ENCODE measurements at regions of chr10 and their contacts with region 1.

Region 1: DNA sequence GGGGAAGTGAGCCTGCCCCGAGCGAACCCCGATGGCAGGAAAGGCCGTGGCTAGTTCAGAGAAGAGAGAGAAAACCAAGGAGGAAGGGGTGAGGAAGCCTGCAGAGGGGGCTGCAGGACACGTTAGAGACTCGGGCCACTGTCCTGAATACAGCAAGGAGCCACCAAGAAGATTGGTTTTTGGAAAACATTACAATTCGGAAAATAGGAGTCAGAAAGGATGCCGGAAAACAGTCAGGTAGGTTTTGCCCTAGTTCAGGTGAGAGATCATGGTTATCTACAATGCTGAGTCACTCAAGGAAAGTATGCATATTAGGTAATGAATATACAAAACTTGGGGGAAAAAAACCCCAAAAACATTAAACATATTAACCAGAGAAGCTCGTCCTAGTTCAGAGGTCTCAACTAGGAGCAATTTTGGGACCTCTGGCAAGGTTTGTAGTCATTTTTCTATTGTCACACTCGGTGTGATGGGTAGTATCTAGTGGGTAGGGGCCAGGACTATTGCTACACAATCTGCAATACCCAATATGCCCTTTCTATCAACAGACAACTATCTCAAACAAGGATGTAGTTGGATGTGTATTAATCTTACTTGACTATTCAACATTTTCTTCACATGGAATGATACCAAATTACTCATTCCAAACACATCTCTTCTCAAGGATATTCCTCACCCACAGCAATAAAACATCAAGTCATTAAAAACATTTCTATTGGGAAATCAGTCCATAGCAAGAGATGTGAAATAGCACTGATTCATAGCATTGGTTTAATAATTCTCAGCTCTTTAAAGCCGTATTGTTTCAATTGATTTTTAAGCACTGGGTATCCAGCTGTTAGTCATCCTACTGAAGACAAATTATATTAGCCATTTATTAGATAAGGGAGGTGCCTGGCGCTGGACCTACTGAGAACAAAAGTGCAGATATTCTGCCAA is 74.4 kb upstream of the RSU1 start:
- DNase-seq: peak; percentile 58
- H3K4me3 Mint-ChIP-seq: peak overlapping the region; percentile 68
- H3K27ac Mint-ChIP-seq: peak overlapping the region; percentile 99
- H3K4me1 Mint-ChIP-seq: peaks cover 23% of the 10 kb centered on the region
- H3K27me3 Mint-ChIP-seq: no peaks in the 10 kb centered on the region
- CTCF ChIP-seq: no peak

Region 2: GRCh38 chr10:16965740-16966447 is 74.2 kb after region 1 on chr10:
- CTCF ChIA-PET with region 1: no interaction called
- intact Hi-C with region 1: loop called (anchors 2 kb)
- DNase-seq: peak; percentile 77
- H3K4me3 Mint-ChIP-seq: no peak overlapping the region
- H3K27ac Mint-ChIP-seq: peak overlapping the region; percentile 54
- H3K4me1 Mint-ChIP-seq: peaks cover 44% of the 10 kb centered on the region
- H3K27me3 Mint-ChIP-seq: no peaks in the 10 kb centered on the region
- CTCF ChIP-seq: no peak

Region 3: DNA sequence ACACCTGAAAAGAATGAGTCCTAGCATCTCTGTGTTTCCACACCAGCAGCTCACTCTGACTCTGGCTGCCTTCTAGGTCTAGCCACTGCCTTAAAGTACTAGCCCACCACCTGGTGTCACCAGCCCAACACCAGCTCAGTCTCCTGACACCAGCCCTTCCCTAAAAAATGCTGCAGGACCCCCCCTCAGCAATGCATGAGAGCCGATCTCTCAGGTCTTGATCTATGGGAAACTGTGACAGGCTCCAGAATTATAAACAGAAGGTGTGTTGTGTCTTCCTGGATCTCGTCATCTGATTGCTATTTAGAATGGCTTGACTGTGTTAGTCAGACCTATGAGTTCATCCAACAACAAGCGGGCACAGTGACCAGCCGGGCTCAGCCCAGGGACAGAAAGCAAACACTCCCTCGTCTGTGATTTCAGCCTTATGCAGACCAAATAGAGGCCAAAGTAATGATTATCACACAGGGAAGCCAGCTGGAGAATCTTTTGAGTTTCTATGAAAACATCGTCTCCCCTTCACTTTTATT is 171.4 kb after region 1 on chr10:
- CTCF ChIA-PET with region 1: no interaction called
- intact Hi-C with region 1: loop called (anchors 2 kb)
- DNase-seq: peak; percentile 82
- H3K4me3 Mint-ChIP-seq: peak overlapping the region; percentile 54
- H3K27ac Mint-ChIP-seq: peak overlapping the region; percentile 86
- H3K4me1 Mint-ChIP-seq: peaks cover 84% of the 10 kb centered on the region
- H3K27me3 Mint-ChIP-seq: no peaks in the 10 kb centered on the region
- CTCF ChIP-seq: no peak

Region 4: DNA sequence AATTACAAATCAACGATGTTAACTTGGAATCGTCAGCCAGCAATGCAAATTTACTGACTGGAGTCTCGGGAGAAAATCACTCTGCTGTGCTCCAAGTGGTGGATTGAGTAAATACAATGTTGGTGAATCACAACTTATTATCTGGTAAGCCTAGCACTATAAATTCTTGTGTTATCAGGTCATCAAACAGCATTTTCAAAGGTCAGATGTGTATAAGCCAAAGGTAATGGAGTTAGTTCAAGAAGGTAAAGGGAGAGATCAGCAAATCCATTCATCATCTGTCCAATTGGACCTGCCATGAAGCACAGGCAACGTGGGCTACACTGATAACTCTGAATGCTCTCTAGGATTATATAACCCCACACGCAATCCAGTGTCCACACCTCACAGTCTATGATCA is 224.0 kb after region 1 on chr10:
- CTCF ChIA-PET with region 1: no interaction called
- intact Hi-C with region 1: loop called (anchors 5 kb)
- DNase-seq: peak; percentile 31
- H3K4me3 Mint-ChIP-seq: peak overlapping the region; percentile 61
- H3K27ac Mint-ChIP-seq: peak overlapping the region; percentile 77
- H3K4me1 Mint-ChIP-seq: peaks cover 31% of the 10 kb centered on the region
- H3K27me3 Mint-ChIP-seq: no peaks in the 10 kb centered on the region
- CTCF ChIP-seq: no peak

Region 5: GRCh38 chr10:17228091-17228940 is 336.7 kb after region 1 on chr10 and contains the start of gene VIM:
- CTCF ChIA-PET with region 1: no interaction called
- intact Hi-C with region 1: loop called (anchors 1 kb)
- DNase-seq: peak; percentile 90
- H3K4me3 Mint-ChIP-seq: peak within 1 kb of the TSS; percentile 95
- H3K27ac Mint-ChIP-seq: peak within 1 kb of the TSS; percentile 73
- H3K4me1 Mint-ChIP-seq: peaks cover 9% of the 10 kb centered on the region
- H3K27me3 Mint-ChIP-seq: no peaks in the 10 kb centered on the region
- CTCF ChIP-seq: no peak
- total RNA-seq, gene VIM: 318 and 486 TPM in 2 replicates